Activated B cell treated with CpG ODN at 0.5 μM for 24 hours (primary cell): ENCODE measurements at regions of chr1 and their contacts with region 1.

Region 1: DNA sequence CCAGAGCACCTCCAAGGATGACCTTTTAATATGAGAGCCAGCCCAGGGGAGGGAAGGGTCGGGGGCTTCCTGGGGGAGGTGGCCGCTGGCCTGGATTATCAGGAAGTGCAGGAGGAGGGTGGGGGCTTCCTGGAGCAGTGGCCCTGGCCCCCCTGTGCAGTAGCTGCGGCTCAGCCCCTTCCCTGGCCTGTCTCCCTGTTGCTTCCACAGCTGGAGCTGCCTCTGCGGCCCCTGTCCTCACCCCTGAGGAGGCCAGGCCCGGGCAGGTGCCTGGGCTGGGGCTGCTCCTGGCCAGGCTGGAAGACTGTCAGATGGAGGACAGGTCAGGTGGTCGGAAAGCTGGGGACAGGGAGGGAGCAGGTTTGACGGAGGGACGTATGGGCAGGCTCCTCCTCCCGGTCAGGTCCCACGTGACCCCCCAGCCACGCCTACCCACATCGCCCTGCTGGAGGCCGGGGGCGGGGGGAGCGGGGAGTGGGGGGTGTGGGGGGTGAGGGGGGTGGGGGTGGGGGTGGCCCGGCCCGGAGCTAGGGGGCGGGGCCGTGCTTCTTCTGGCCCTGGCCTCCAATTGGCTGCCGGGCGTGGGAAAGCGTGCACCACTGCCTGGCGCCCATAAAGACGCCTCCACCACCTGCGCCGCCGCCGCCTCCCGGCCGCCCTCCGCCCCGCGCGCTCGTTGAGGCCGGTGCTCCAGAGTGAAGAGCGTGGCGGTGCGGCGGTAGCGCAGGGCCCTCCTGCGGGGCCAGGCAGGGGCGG is 10.2 kb upstream of the TNFRSF14 start:
- DNase-seq: peak; percentile 82
- ATAC-seq: peak; percentile 51
- H3K4me3 Mint-ChIP-seq: peak overlapping the region; percentile 87
- H3K27ac Mint-ChIP-seq: peak overlapping the region; percentile 50
- H3K4me1 Mint-ChIP-seq: peaks cover 40% of the 10 kb centered on the region
- H3K27me3 Mint-ChIP-seq: peaks cover 6% of the 10 kb centered on the region
- CTCF ChIP-seq: no peak

Region 2: GRCh38 chr1:1908230-1908791 is 637.6 kb before region 1 on chr1:
- CTCF ChIA-PET with region 1: no interaction called
- POLR2A ChIA-PET with region 1: no interaction called
- intact Hi-C with region 1: no loop called
- DNase-seq: peak; percentile 50
- ATAC-seq: no peak
- H3K4me3 Mint-ChIP-seq: peak overlapping the region; percentile 78
- H3K27ac Mint-ChIP-seq: no peak overlapping the region
- H3K4me1 Mint-ChIP-seq: peaks cover 24% of the 10 kb centered on the region
- H3K27me3 Mint-ChIP-seq: no peaks in the 10 kb centered on the region
- CTCF ChIP-seq: no peak

Region 3: GRCh38 chr1:2194898-2195673 is 350.9 kb before region 1 on chr1:
- CTCF ChIA-PET with region 1: interaction called, 12 read pairs
- POLR2A ChIA-PET with region 1: interaction called, 27 read pairs
- intact Hi-C with region 1: loop called (anchors 1 kb)
- DNase-seq: peak; percentile 87
- ATAC-seq: peak; percentile 77
- H3K4me3 Mint-ChIP-seq: peak overlapping the region; percentile 91
- H3K27ac Mint-ChIP-seq: peak overlapping the region; percentile 96
- H3K4me1 Mint-ChIP-seq: peaks cover 25% of the 10 kb centered on the region
- H3K27me3 Mint-ChIP-seq: no peaks in the 10 kb centered on the region
- CTCF ChIP-seq: peak; percentile 23

Region 4: GRCh38 chr1:2314803-2315673 is 230.9 kb before region 1 on chr1:
- CTCF ChIA-PET with region 1: no interaction called
- POLR2A ChIA-PET with region 1: no interaction called
- intact Hi-C with region 1: loop called (anchors 5 kb)
- DNase-seq: peak; percentile 78
- ATAC-seq: peak; percentile 58
- H3K4me3 Mint-ChIP-seq: peak overlapping the region; percentile 66
- H3K27ac Mint-ChIP-seq: peak overlapping the region; percentile 18
- H3K4me1 Mint-ChIP-seq: peaks cover 37% of the 10 kb centered on the region
- H3K27me3 Mint-ChIP-seq: no peaks in the 10 kb centered on the region
- CTCF ChIP-seq: peak; percentile 83

Region 5: GRCh38 chr1:2412519-2413233 is 133.3 kb before region 1 on chr1 and contains the start of gene PEX10:
- CTCF ChIA-PET with region 1: interaction called, 21 read pairs
- POLR2A ChIA-PET with region 1: interaction called, 57 read pairs
- intact Hi-C with region 1: loop called (anchors 1 kb)
- DNase-seq: peak; percentile 100
- ATAC-seq: peak; percentile 93
- H3K4me3 Mint-ChIP-seq: peak within 1 kb of the TSS; percentile 83
- H3K27ac Mint-ChIP-seq: peak within 1 kb of the TSS; percentile 71
- H3K4me1 Mint-ChIP-seq: peaks cover 45% of the 10 kb centered on the region
- H3K27me3 Mint-ChIP-seq: no peaks in the 10 kb centered on the region
- CTCF ChIP-seq: no peak
- total RNA-seq, gene PEX10: 17.4 and 18.9 TPM in 2 replicates

Region 6: DNA sequence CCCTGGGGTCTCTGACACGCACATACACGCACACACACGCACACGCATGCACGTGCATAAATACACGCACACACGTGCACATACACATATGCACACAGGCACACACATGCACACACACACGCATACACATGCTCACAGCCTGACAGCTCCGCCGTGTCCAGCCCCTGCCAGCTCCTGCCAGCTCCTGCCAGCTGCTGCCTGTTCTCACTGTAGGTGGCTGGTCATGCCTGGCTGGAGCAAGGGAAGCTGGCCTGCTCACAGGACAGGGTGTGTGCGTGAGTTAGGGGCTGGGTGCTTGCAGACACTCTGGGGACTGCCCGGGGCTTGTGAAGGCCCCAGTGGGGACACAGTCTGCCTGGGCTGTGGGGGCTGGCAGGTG is 65.0 kb before region 1 on chr1:
- CTCF ChIA-PET with region 1: no interaction called
- POLR2A ChIA-PET with region 1: no interaction called
- intact Hi-C with region 1: no loop called
- DNase-seq: no peak
- ATAC-seq: peak; percentile 31
- H3K4me3 Mint-ChIP-seq: no peak overlapping the region
- H3K27ac Mint-ChIP-seq: no peak overlapping the region
- H3K4me1 Mint-ChIP-seq: peaks cover 9% of the 10 kb centered on the region
- H3K27me3 Mint-ChIP-seq: no peaks in the 10 kb centered on the region
- CTCF ChIP-seq: no peak

Region 7: DNA sequence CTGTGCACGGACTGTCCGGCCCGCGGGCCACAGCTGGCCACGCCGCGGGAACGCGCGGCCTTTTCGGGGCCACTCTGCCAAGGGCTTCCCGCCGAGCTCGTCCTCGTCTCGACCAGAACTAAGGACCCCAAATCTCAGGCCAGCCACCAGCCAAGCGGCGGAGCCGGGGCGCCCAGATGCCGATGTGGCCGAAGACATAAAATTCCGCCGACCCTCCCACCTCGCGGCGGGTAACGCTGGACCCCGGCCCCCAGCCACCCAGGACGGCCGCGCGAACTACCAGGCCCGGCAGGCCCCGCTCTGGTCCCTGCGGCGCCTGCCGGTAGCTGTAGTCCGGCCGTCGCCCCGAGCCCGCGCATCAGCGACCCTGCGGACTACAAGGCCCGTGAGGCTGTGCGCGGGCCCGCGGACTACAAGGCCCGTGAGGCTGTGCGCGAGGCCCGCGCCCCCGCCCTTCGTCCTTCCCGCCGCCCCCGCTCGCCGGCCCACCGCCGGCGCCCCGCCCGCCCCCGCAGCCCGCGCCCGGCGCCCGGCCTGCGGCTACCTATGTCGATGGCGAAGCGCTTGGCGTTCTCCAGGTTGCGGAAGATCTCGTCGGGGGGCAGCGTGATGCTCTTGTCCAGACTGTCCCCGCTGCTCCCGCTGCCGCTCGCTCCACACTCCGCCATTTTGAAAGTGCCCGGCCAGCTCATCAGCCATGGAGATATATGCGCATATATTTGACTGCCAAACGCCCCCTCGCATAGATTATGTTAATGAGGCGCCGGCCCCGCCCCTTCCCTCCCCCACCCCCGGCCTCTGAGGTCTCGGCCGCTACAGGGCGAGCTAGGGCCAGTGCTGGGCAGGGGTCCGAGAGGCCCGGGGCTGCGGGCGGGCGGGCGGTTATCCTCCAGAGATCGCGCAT is 19.8 kb before region 1 on chr1 and contains the start of gene PANK4:
- CTCF ChIA-PET with region 1: interaction called, 16 read pairs
- POLR2A ChIA-PET with region 1: interaction called, 114 read pairs
- intact Hi-C with region 1: loop called (anchors 1 kb)
- DNase-seq: peak; percentile 90
- ATAC-seq: peak; percentile 93
- H3K4me3 Mint-ChIP-seq: peak within 1 kb of the TSS; percentile 96
- H3K27ac Mint-ChIP-seq: peak within 1 kb of the TSS; percentile 96
- H3K4me1 Mint-ChIP-seq: peaks cover 45% of the 10 kb centered on the region
- H3K27me3 Mint-ChIP-seq: peaks cover 3% of the 10 kb centered on the region
- CTCF ChIP-seq: no peak
- total RNA-seq, gene PANK4: 43.1 and 54.0 TPM in 2 replicates

Region 8: GRCh38 chr1:2556277-2556677 is 10.3 kb after region 1 on chr1 and contains the start of gene TNFRSF14:
- CTCF ChIA-PET with region 1: interaction called, 4 read pairs
- POLR2A ChIA-PET with region 1: interaction called, 74 read pairs
- intact Hi-C with region 1: loop called (anchors 1 kb)
- DNase-seq: peak; percentile 62
- ATAC-seq: peak; percentile 61
- H3K4me3 Mint-ChIP-seq: peak within 1 kb of the TSS; percentile 95
- H3K27ac Mint-ChIP-seq: peak within 1 kb of the TSS; percentile 96
- H3K4me1 Mint-ChIP-seq: peaks cover 48% of the 10 kb centered on the region
- H3K27me3 Mint-ChIP-seq: no peaks in the 10 kb centered on the region
- CTCF ChIP-seq: no peak
- total RNA-seq, gene TNFRSF14: 140 and 148 TPM in 2 replicates

Region 9: GRCh38 chr1:2642560-2643413 is 96.8 kb after region 1 on chr1:
- CTCF ChIA-PET with region 1: no interaction called
- POLR2A ChIA-PET with region 1: interaction called, 8 read pairs
- intact Hi-C with region 1: loop called (anchors 1 kb)
- DNase-seq: peak; percentile 92
- ATAC-seq: peak; percentile 79
- H3K4me3 Mint-ChIP-seq: peak overlapping the region; percentile 80
- H3K27ac Mint-ChIP-seq: peak overlapping the region; percentile 73
- H3K4me1 Mint-ChIP-seq: peaks cover 11% of the 10 kb centered on the region
- H3K27me3 Mint-ChIP-seq: peaks cover 3% of the 10 kb centered on the region
- CTCF ChIP-seq: no peak